Cardiac septum (tissue), 1 donor: ENCODE measurements at regions of chr3 and their contacts with region 1.

Region 1: GRCh38 chr3:88113311-88114162 is 36.2 kb upstream of the C3orf38 start:
- DNase-seq: no peak

Region 2: GRCh38 chr3:87350364-87351199 is 763.0 kb before region 1 on chr3:
- intact Hi-C with region 1: loop called (anchors 5 kb)
- DNase-seq: no peak

Region 3: DNA sequence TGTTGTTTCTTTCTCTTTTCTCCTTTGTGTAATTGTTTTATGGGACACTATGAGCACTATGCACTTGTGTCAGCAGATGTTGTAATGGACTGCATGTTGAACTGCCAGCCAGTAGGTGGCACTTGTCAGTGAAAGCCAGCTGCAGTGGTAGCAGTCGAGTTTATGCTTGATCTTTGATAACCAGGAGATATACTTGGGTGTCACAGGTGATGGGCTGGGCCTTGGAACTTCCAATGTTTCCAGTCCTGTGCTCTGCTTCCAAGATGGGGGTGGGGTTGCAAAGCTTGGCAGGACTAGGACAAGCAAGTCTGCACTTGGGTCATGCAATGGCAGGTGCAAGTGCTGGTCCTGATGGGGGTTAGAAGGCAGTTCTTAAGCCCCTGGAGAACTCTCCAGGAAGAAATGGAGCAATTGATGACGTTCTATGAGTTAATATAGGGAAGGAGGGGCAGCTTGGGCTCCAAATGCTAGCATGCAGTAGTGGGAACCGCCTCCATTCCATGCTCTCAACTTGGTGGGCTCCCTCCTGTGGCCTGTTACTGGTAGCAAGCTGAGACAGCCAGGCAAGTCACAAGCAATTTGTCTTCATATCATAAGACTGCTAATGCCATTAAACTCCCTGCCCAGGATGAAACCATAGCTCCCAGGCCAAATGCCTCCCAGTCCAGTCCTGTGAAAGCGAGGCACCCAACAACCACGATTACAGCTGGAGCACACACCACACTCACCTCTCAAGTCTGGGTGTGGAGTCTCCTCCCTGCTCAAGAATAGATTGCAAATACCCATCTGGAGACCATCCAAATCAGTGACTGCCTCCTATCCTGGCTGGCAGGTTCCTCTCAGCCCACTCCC is 342.0 kb before region 1 on chr3:
- intact Hi-C with region 1: loop called (anchors 5 kb)
- DNase-seq: peak; percentile 70